ENCODE measurements at regions of chr14 and their contacts with region 1.

Region 1: DNA sequence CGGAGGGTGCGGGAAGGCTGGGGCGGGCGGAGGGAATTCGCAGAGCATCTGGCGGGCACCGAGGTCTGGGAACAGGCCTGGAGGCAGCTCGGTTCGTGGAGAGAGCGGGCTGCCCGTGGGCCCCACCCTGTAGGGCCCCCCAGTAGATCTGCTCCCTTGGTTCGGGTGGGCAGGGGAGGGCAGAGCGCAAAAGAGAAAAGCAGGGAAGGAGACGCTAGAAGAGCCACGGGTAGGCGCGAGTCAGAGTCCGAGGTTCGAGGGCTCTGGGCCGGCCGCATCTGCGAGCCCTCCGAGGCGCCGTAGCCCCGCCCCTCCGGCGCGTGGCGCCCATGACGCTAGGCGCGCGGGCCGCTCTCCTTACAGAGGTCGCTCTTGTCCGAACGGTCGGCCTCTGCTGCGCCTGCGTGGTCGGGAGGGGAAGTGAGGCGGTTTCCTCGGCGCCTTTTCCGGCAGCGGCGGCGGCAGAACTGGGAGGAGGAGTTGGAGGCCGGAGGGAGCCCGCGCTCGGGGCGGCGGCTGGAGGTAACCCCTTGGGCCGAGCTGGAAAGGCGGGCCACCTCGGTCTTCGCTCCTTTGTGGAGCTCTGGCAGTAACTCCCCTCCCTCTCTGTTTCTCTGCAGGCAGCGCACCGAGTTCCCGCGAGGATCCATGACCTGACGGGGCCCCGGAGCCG is at the start of gene ARF6:
- DNase-seq: peak; percentile 99
- H3K4me3 ChIP-seq: peak within 1 kb of the TSS; percentile 66 to 98 (median 89)
- H3K27ac ChIP-seq: peak within 1 kb of the TSS; percentile 98 to 100 (median 99)
- H3K4me1 ChIP-seq: peaks cover 24 to 34% of the 10 kb centered on the region in 2 donors
- H3K27me3 ChIP-seq: no peaks in the 10 kb centered on the region
- CTCF ChIP-seq: peak in 1 of 6 experiments; percentile 42
- POLR2A ChIP-seq: peak; percentile 64 to 96
- total RNA-seq, gene ARF6: 35.6 to 59.4 (median 48.5) TPM

Region 2: DNA sequence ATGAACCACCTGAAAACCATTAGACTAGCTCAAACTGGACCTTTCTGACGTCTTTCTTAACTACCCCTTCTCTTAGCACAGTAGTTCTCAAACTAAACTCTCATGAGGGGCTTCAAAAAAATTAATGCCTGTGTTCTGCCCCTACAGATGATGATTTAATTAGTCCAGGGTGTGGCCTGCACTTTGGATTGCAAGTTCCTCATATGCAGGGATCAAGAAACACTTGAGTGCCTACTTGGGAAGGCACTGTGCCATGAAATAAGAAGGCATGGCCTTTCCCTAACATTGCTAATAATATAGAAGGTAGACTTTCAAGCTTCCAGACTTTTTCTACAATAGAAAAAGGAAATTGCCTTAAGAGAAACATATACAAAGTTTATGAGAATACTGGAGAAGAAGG is 147.6 kb before region 1 on chr14:
- intact Hi-C with region 1: no loop called
- DNase-seq: peak; percentile 68 to 69
- H3K4me3 ChIP-seq: no peak overlapping the region
- H3K27ac ChIP-seq: peak overlapping the region; percentile 25 to 42 (median 42)
- H3K4me1 ChIP-seq: peaks cover 5 to 14% of the 10 kb centered on the region in 2 donors
- H3K27me3 ChIP-seq: no peaks in the 10 kb centered on the region
- CTCF ChIP-seq: no peak
- POLR2A ChIP-seq: no peak

Region 3: GRCh38 chr14:50003213-50004031 is 110.7 kb after region 1 on chr14:
- intact Hi-C with region 1: loop called (anchors 5 kb)
- DNase-seq: peak; percentile 76 to 77
- H3K4me3 ChIP-seq: peak overlapping the region in 2 of 3 donors; percentile 42 to 63
- H3K27ac ChIP-seq: peak overlapping the region; percentile 93 to 96 (median 93)
- H3K4me1 ChIP-seq: peaks cover 44 to 47% of the 10 kb centered on the region in 2 donors
- H3K27me3 ChIP-seq: no peaks in the 10 kb centered on the region
- CTCF ChIP-seq: peak in 2 of 6 experiments; percentile 10 to 22
- POLR2A ChIP-seq: peak; percentile 11 to 65

Measured in thyroid gland (tissue), 4 donors.